ENCODE measurements at regions of chr20 and their contacts with region 1.

Region 1: DNA sequence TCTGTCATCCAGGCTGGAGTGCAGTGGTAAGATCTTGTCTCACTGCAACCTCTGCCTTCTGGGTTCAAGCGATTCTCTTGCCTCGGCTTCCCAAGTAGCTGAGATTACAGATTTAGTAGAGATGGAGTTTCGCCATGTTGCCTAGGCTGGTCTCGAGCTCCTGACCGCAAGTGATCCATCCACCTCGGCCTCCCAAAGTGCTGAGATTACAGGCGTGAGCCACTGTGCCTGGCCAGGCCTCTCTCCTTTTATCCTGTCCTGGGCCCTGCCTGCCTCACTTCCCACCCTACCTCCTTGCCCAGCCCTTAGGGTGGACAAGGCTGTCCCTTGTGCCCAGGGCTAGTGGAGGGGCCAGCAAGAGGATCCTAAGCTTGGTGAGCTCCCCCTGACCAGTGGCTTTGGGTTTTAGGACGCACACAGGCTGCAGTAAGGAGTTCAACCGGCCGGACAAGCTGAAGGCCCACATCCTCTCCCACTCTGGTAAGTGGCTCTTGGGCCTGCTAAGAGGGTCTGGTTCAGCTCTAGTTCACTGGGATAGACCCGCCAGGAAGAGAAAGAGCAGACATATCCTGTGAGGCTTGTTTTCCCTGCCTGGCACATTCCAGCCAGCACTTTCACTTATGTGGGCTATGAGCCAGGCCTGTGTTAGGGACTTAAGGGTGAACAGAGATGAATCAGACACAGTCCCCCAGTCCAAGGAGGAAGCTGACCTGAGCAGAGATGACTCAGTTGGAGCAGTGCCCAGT is 21.9 kb upstream of the CHMP4B start:
- DNase-seq: peak; percentile 100
- ATAC-seq: peak; percentile 88
- H3K4me3 ChIP-seq: peak overlapping the region; percentile 44; the same call in 1 of the 2 replicates
- H3K27ac ChIP-seq: peak overlapping the region; percentile 90
- H3K4me1 ChIP-seq: peaks cover 41% of the 10 kb centered on the region
- H3K27me3 ChIP-seq: no peaks in the 10 kb centered on the region
- CTCF ChIP-seq: no peak

Region 2: GRCh38 chr20:33686100-33686983 is 102.9 kb before region 1 on chr20 and contains the start of gene E2F1:
- CTCF ChIA-PET with region 1: no interaction called
- POLR2A ChIA-PET with region 1: no interaction called
- intact Hi-C with region 1: loop called (anchors 10 kb)
- DNase-seq: peak; percentile 95
- ATAC-seq: peak; percentile 97
- H3K4me3 ChIP-seq: peak within 1 kb of the TSS; percentile 82
- H3K27ac ChIP-seq: no peak within 1 kb of the TSS
- H3K4me1 ChIP-seq: peaks cover 18% of the 10 kb centered on the region
- H3K27me3 ChIP-seq: no peaks in the 10 kb centered on the region
- CTCF ChIP-seq: no peak
- total RNA-seq, gene E2F1: 63.7 and 72.2 TPM in 2 replicates

Region 3: GRCh38 chr20:33753763-33754162 is 35.5 kb before region 1 on chr20:
- CTCF ChIA-PET with region 1: no interaction called
- POLR2A ChIA-PET with region 1: no interaction called
- intact Hi-C with region 1: no loop called
- DNase-seq: peak; percentile 11
- ATAC-seq: no peak; the same call in 1 of the 2 replicates
- H3K4me3 ChIP-seq: no peak overlapping the region
- H3K27ac ChIP-seq: no peak overlapping the region
- H3K4me1 ChIP-seq: no peaks in the 10 kb centered on the region
- H3K27me3 ChIP-seq: no peaks in the 10 kb centered on the region
- CTCF ChIP-seq: no peak

Region 4: GRCh38 chr20:33810885-33811777 is 21.8 kb after region 1 on chr20 and contains the start of gene CHMP4B:
- CTCF ChIA-PET with region 1: interaction called, 3 read pairs
- POLR2A ChIA-PET with region 1: interaction called, 4 read pairs
- intact Hi-C with region 1: loop called (anchors 1 kb)
- DNase-seq: peak; percentile 99
- ATAC-seq: peak; percentile 88
- H3K4me3 ChIP-seq: peak within 1 kb of the TSS; percentile 89
- H3K27ac ChIP-seq: peak within 1 kb of the TSS; percentile 87
- H3K4me1 ChIP-seq: peaks cover 30% of the 10 kb centered on the region
- H3K27me3 ChIP-seq: no peaks in the 10 kb centered on the region
- CTCF ChIP-seq: no peak
- total RNA-seq, gene CHMP4B: 68.8 and 91.1 TPM in 2 replicates